ENCODE measurements at regions of chr17 and their contacts with region 1.

Region 1: GRCh38 chr17:58692239-58693055 is at the start of gene RAD51C:
- DNase-seq: peak; percentile 84 to 92 (median 86)
- H3K4me3 ChIP-seq: peak within 1 kb of the TSS; percentile 67
- H3K27ac ChIP-seq: peak within 1 kb of the TSS; percentile 15 to 85
- H3K4me1 ChIP-seq: peaks cover 2% of the 10 kb centered on the region
- H3K27me3 ChIP-seq: no peaks in the 10 kb centered on the region
- CTCF ChIP-seq: no peak
- EP300 ChIP-seq: no peak
- POLR2A ChIP-seq: peak; percentile 54
- total RNA-seq, gene RAD51C: 14.2 to 22.2 (median 19.3) TPM

Region 2: GRCh38 chr17:58587702-58588254 is 104.7 kb before region 1 on chr17:
- intact Hi-C with region 1: loop called in 1 of 4 experiments (anchors 10 kb)
- DNase-seq: peak; percentile 13 to 59 (median 43)
- H3K4me3 ChIP-seq: no peak overlapping the region
- H3K27ac ChIP-seq: no peak overlapping the region
- H3K4me1 ChIP-seq: no peaks in the 10 kb centered on the region
- H3K27me3 ChIP-seq: no peaks in the 10 kb centered on the region
- CTCF ChIP-seq: peak; percentile 36 to 58 (median 42)
- EP300 ChIP-seq: no peak
- POLR2A ChIP-seq: no peak

Region 3: GRCh38 chr17:58631523-58632323 is 60.7 kb before region 1 on chr17:
- intact Hi-C with region 1: loop called in 1 of 4 experiments (anchors 5 kb)
- DNase-seq: peak; percentile 92 to 96 (median 95)
- H3K4me3 ChIP-seq: peak overlapping the region; percentile 49
- H3K27ac ChIP-seq: peak overlapping the region; percentile 79 to 83
- H3K4me1 ChIP-seq: no peaks in the 10 kb centered on the region
- H3K27me3 ChIP-seq: no peaks in the 10 kb centered on the region
- CTCF ChIP-seq: peak in 2 of 3 donors; percentile 18 to 19
- EP300 ChIP-seq: no peak
- POLR2A ChIP-seq: peak; percentile 81

Region 4: GRCh38 chr17:58734040-58734872 is 41.8 kb after region 1 on chr17:
- intact Hi-C with region 1: no loop called
- DNase-seq: no peak
- H3K4me3 ChIP-seq: no peak overlapping the region
- H3K27ac ChIP-seq: no peak overlapping the region
- H3K4me1 ChIP-seq: no peaks in the 10 kb centered on the region
- H3K27me3 ChIP-seq: no peaks in the 10 kb centered on the region
- CTCF ChIP-seq: no peak
- EP300 ChIP-seq: no peak
- POLR2A ChIP-seq: no peak

Region 5: DNA sequence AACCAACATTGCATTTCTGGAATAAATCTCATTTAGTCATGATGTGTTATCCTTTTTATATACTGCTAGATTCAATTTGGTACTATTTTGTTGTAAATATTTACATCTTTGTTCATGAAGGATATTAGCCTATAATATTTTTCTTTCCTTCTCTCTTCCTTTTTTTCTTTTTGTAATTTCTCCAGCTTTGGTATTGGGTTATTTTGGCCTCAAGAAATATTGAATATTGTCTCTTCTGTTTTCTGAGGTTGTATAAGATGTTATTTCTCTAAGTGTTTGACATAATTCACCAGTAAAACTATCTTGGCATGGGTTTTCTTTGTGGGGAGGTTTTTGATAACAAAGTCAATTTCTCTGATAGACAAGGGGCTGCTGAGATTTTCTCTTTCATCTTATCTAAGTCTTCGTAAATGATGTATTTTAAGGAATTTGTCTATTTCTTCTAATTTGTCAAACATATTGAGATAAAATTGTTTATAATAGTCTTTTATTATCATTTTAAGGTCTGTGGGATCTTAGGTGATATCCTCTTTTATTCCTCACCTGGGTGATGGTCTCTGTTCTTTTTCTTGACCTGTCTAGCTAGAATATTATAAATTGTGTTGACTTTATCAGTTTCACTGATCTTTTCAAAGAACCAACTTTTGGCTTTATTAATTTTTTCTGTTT is 107.9 kb after region 1 on chr17:
- intact Hi-C with region 1: no loop called
- DNase-seq: no peak
- H3K4me3 ChIP-seq: no peak overlapping the region
- H3K27ac ChIP-seq: no peak overlapping the region
- H3K4me1 ChIP-seq: no peaks in the 10 kb centered on the region
- H3K27me3 ChIP-seq: no peaks in the 10 kb centered on the region
- CTCF ChIP-seq: no peak
- EP300 ChIP-seq: no peak
- POLR2A ChIP-seq: no peak

Measured in ovary (tissue), 10 donors.